Calu3 (cell line): ENCODE measurements at regions of chr17 and their contacts with region 1.

Region 1: DNA sequence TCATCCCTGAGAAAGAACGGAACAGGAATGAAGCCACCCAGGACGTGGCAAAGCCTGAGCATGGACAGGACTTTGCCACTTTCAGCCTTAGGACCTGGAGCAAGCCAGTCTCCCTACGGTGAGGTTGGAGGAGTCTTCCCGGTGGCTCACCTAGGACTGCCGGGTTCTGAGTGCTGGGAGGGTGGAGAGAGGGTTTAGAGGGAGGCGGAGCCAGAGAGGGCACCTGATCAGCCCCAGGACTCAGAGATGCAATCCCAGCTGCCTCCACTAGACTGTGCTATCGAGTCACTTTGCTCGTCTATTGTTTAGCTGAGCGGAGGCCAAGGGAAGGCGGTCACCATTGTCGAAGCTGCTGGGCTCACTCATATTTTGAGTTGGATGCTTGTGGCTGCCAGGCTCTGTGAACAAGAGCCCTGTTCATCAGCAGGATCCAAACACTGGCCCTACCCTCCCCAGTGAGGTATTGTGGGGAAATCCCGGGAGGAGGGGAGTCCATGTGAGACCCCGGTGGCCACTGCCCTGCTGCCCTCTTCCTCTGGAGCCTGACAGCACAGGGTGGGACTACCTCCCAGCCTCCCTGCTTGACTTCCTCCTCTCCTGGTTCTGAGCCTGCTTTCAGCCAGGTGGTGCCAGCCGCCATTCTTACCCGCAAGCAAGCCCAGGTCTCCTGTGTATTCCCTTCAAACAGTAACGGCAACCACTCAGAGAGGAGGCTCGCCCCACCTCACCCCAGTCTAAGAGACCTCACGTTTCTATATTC is 7.0 kb downstream of the KRT14 start:
- DNase-seq: peak; percentile 96
- H3K4me3 Mint-ChIP-seq: no peak overlapping the region
- H3K27ac Mint-ChIP-seq: no peak overlapping the region
- H3K4me1 Mint-ChIP-seq: peaks cover 47% of the 10 kb centered on the region
- H3K27me3 Mint-ChIP-seq: no peaks in the 10 kb centered on the region
- CTCF ChIP-seq: peak; percentile 93

Region 2: DNA sequence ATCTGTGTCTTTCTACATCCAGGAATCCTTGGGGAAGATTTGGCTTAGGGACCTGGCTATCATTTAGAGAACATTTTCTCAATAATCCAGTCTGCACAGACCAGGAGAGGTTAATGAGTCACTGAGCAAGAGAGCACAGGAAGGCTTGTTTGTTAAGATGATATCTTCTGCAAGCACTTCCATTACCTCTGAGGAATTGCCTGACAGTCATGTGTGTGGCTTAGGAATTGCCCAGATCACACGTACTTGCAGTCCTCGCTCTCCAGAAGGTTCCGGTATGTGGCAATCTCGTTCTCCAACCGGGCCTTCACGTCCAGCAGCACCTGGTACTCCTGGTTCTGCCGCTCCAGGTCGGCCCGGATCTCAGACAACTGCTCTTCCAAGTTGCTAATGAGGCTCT is 158.5 kb before region 1 on chr17:
- CTCF ChIA-PET with region 1: no interaction called
- intact Hi-C with region 1: no loop called
- DNase-seq: no peak
- H3K4me3 Mint-ChIP-seq: no peak overlapping the region
- H3K27ac Mint-ChIP-seq: no peak overlapping the region
- H3K4me1 Mint-ChIP-seq: peaks cover 46% of the 10 kb centered on the region
- H3K27me3 Mint-ChIP-seq: no peaks in the 10 kb centered on the region
- CTCF ChIP-seq: no peak

Region 3: GRCh38 chr17:41559548-41559947 is 20.1 kb before region 1 on chr17:
- CTCF ChIA-PET with region 1: interaction called, 6 read pairs
- intact Hi-C with region 1: loop called (anchors 2 kb)
- DNase-seq: no peak
- H3K4me3 Mint-ChIP-seq: no peak overlapping the region
- H3K27ac Mint-ChIP-seq: no peak overlapping the region
- H3K4me1 Mint-ChIP-seq: peaks cover 11% of the 10 kb centered on the region
- H3K27me3 Mint-ChIP-seq: peaks cover 14% of the 10 kb centered on the region
- CTCF ChIP-seq: no peak

Region 4: DNA sequence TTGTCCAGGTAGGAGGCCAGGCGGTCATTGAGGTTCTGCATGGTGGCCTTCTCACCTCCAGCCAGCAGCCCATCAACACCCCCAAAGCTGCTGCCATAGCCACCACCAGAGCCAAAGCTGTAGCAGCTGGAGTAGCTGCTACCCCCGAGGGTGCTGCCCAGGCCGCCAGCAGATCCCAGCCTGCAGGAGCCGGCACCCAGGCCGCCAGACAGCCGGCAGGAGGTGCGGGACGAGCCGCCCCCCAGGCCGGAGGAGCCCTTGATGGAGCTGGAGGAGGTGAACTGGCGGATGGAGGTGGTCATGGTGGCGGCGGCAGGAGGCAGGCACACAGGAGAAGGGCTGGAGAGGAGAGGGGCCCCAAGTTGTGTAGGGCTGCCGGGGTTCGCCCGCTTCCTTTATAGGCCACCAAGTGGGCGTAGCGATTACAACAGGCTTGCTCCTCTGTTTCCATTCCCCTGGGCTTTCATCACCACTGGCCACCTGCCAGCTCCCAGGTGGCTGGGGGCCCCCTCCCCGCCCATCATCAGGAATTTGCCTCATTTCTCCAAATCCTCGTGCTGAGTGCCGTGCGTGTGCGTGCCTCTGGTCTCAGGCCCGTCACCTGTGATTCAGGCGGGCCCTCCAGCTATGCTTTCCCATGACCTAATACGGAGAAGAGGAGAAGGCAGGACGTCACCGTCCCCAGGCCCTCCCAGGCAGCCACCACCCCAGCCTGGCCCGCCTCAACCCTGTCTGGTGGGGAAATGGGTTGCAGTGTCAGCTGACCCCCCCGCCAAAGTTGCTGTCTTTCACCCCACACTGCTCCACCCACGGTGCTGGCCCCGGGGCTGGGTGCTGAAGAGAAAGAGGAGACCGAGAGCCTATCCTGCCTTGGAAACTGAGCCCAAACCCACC is 44.8 kb after region 1 on chr17 and contains the start of gene KRT17:
- CTCF ChIA-PET with region 1: interaction called, 12 read pairs
- intact Hi-C with region 1: loop called (anchors 1 kb)
- DNase-seq: peak; percentile 96
- H3K4me3 Mint-ChIP-seq: peak within 1 kb of the TSS; percentile 66
- H3K27ac Mint-ChIP-seq: peak within 1 kb of the TSS; percentile 85
- H3K4me1 Mint-ChIP-seq: peaks cover 56% of the 10 kb centered on the region
- H3K27me3 Mint-ChIP-seq: no peaks in the 10 kb centered on the region
- CTCF ChIP-seq: peak; percentile 57
- total RNA-seq, gene KRT17: 472 and 593 TPM in 2 replicates